ENCODE measurements at regions of chr14 and their contacts with region 1.

Region 1: DNA sequence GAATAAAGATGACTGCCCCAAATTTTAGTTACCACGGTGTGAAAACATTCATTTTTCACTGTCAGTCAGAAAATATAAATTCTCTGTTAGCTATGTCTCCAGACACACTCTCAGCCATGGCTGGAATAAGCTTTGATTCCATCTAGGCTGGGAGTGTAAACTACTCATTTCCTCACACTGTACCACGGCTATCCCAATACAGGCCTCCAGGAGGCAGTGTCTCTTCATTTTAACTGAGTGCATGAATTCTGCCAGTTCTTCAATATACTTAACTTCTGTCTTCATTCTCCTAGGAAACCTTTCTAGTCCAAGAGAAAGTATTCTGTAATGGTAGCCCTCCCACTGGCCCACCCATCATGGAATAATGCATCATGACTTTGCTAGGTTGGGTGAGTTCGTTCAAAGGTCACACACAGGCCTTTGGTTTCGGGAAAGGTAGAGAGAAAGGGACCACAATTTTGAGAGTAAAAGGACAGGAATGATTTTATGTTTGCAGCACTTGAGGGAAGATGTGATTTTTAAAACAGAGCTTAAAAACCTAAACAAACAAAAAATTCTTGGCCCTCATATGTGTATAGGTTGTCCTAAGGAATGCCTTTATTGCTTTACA is 381.1 kb downstream of the SEC23A start:
- DNase-seq: no peak
- ATAC-seq: peak; percentile 42
- H3K4me3 Mint-ChIP-seq: no peak overlapping the region
- H3K27ac Mint-ChIP-seq: no peak overlapping the region
- H3K4me1 Mint-ChIP-seq: no peaks in the 10 kb centered on the region
- H3K27me3 Mint-ChIP-seq: no peaks in the 10 kb centered on the region
- CTCF ChIP-seq: no peak

Region 2: DNA sequence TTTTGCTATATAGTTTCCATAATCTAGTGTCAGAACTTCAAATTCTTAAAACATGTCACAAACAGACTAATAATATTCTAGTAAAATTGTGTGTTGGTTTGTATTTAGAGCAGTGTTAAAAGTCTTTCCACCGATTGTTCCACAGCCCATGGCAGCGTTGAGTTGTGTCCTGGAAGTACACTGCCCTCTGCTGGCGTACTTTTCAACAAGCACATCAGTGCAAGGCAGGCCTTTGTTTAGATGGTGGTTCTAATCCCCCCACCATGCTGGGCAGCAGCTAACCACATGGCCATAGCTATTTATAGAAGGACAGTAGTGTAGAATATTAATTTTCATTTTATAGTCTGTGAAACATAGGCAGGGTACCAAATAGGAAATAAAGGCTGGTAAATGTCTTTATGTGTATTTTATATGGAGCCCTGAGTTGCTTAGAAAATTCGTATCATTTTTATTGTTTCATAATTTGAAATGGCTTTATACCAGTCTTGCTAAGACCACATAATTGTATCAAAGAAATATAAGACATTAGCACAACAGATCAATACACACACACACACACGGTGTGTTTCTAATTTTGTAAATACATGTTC is 145.7 kb after region 1 on chr14:
- CTCF ChIA-PET with region 1: no interaction called
- POLR2A ChIA-PET with region 1: no interaction called
- intact Hi-C with region 1: loop called (anchors 1 kb)
- DNase-seq: no peak
- ATAC-seq: no peak
- H3K4me3 Mint-ChIP-seq: no peak overlapping the region
- H3K27ac Mint-ChIP-seq: no peak overlapping the region
- H3K4me1 Mint-ChIP-seq: no peaks in the 10 kb centered on the region
- H3K27me3 Mint-ChIP-seq: no peaks in the 10 kb centered on the region
- CTCF ChIP-seq: no peak

Region 3: DNA sequence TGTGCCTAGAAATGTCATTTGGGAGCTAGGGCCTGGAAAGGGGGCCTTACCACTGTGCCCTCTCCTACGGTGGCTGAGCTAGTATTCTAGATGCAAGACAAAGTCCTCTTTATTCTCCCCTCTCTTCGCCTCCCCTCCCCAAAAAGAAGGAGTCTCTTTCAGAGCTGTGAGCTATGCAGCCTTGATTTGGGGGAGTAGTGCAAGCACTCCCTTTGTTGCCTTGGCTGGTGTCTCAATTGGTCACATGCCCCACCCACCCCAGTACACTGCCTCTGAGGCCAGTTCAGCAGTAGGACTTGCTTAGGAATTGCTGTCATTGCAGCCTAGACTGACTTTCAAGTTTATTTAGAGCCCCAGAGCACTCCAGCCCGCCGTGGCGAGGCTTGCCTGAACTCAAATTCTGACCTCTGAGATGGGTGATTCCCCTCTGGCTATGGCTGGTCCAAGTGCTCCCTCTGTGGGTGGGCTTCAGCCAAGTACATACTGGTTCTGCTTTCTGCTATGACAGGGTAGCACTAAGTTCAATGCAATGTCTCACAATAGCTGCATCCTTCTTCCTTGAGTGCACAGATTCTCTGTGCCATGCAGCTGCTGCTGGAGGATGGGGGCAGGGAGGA is 747.3 kb after region 1 on chr14:
- CTCF ChIA-PET with region 1: no interaction called
- POLR2A ChIA-PET with region 1: no interaction called
- intact Hi-C with region 1: loop called (anchors 5 kb)
- DNase-seq: peak; percentile 19
- ATAC-seq: peak; percentile 70
- H3K4me3 Mint-ChIP-seq: no peak overlapping the region
- H3K27ac Mint-ChIP-seq: no peak overlapping the region
- H3K4me1 Mint-ChIP-seq: no peaks in the 10 kb centered on the region
- H3K27me3 Mint-ChIP-seq: peaks cover 21% of the 10 kb centered on the region
- CTCF ChIP-seq: no peak

Region 4: GRCh38 chr14:39548358-39548757 is 826.4 kb after region 1 on chr14:
- CTCF ChIA-PET with region 1: no interaction called
- POLR2A ChIA-PET with region 1: no interaction called
- intact Hi-C with region 1: no loop called
- DNase-seq: no peak
- ATAC-seq: no peak
- H3K4me3 Mint-ChIP-seq: no peak overlapping the region
- H3K27ac Mint-ChIP-seq: no peak overlapping the region
- H3K4me1 Mint-ChIP-seq: no peaks in the 10 kb centered on the region
- H3K27me3 Mint-ChIP-seq: no peaks in the 10 kb centered on the region
- CTCF ChIP-seq: no peak